ENCODE measurements at regions of chr10 and their contacts with region 1.

Region 1: GRCh38 chr10:71893920-71894319 is 42.9 kb upstream of the PSAP start:
- DNase-seq: no peak
- H3K4me3 ChIP-seq: no peak overlapping the region
- H3K4me3 Mint-ChIP-seq: no peak overlapping the region
- H3K27ac Mint-ChIP-seq: no peak overlapping the region
- H3K4me1 ChIP-seq: peaks cover 22% of the 10 kb centered on the region
- H3K4me1 Mint-ChIP-seq: peaks cover 20% of the 10 kb centered on the region
- H3K27me3 ChIP-seq: no peaks in the 10 kb centered on the region
- H3K27me3 Mint-ChIP-seq: no peaks in the 10 kb centered on the region
- CTCF ChIP-seq: no peak

Region 2: DNA sequence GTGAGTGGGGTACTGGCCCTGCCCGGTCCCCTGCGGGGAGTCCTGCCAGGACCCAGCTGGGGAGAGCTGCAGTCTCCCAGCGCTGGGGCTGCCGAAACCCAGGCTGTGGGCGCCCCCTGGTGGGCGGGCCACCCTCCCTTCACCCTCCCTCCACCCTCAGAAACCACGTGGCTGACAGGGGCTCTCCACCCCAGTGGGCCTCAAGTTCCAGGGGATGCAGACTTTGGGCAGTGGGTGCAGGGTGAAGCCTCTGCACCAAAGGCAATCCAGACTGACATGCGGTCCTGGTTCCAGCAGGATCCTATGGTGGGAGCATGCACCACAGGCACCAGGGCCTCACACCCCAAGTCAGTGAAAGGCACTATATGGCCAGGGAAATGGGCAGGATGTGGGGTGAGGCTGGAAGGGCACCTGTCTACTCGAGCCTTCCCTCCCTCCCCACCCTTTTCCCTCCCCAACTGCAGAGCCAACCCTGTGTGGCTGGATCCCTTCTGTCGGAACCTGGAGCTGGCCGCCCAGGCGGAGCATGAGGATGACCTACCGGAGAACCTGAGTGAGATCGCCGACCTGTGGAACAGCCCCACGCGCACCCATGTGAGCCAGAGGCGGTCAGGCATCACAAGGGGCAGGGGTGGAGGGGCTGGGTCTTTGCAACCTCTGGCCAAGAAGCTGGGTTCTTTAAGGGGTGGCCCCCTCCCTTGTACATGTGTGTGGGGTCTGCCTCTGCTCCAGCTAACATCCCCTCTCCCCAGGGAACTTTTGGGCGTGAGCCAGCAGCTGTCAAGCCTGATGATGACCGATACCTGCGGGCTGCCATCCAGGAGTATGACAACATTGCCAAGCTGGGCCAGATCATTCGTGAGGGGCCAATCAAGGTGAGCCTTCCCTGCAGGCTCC is 81.7 kb before region 1 on chr10:
- CTCF ChIA-PET with region 1: interaction called, 5 read pairs
- POLR2A ChIA-PET with region 1: no interaction called
- intact Hi-C with region 1: loop called (anchors 1 kb)
- DNase-seq: peak; percentile 74 to 91
- H3K4me3 ChIP-seq: no peak overlapping the region
- H3K4me3 Mint-ChIP-seq: no peak overlapping the region
- H3K27ac Mint-ChIP-seq: no peak overlapping the region
- H3K4me1 ChIP-seq: no peaks in the 10 kb centered on the region
- H3K4me1 Mint-ChIP-seq: peaks cover 7% of the 10 kb centered on the region
- H3K27me3 ChIP-seq: no peaks in the 10 kb centered on the region
- H3K27me3 Mint-ChIP-seq: no peaks in the 10 kb centered on the region
- CTCF ChIP-seq: peak; percentile 98

Region 3: GRCh38 chr10:71850637-71851464 is 43.1 kb before region 1 on chr10 and contains the start of gene PSAP:
- CTCF ChIA-PET with region 1: interaction called, 29 read pairs
- POLR2A ChIA-PET with region 1: no interaction called
- intact Hi-C with region 1: no loop called
- DNase-seq: peak; percentile 100
- H3K4me3 ChIP-seq: peak within 1 kb of the TSS; percentile 75
- H3K4me3 Mint-ChIP-seq: peak within 1 kb of the TSS; percentile 92
- H3K27ac Mint-ChIP-seq: peak within 1 kb of the TSS; percentile 90
- H3K4me1 ChIP-seq: peaks cover 20% of the 10 kb centered on the region
- H3K4me1 Mint-ChIP-seq: peaks cover 27% of the 10 kb centered on the region
- H3K27me3 ChIP-seq: no peaks in the 10 kb centered on the region
- H3K27me3 Mint-ChIP-seq: no peaks in the 10 kb centered on the region
- CTCF ChIP-seq: no peak
- total RNA-seq, gene PSAP: 1,227 and 1,316 TPM in 2 replicates

Region 4: DNA sequence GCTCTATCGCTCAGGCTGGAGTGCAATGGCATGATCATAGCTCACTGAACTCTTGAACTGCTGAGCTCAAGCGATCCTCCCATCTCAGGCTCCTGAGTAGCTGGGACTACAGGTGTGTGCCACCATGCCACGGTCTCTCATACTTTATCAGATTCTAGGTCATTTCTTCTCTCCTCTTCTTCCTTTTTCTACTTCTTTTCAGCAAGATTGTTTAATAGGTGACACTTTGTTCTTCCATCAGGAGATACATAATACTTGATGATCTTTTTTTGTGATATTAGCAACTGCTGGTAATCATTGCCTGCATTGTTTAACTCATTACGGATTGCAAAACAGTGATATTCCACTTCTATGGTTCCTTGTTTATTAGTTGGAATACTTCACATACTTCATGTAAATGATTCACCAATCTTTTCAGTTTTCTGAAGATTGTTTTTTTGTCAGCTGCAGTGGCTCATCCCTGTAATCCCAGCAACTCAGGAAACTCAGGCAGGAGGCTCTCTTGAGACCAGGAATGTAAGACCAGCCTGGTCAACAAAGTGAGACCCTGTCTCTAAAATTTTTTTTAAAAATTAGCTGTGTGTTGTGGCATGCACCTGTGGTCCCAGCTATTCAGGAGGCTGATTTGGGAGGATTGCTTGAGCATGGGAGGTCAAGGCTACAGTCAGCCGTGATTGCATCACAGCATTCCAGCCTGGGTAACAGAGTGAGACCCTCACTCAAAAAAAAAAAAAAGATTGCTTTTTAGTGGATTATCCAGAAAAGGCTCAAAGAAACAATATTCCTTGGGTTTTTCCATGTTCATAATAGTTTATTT is 34.1 kb after region 1 on chr10:
- CTCF ChIA-PET with region 1: interaction called, 4 read pairs
- POLR2A ChIA-PET with region 1: no interaction called
- intact Hi-C with region 1: loop called (anchors 2 kb)
- DNase-seq: peak; percentile 74 to 77
- H3K4me3 ChIP-seq: no peak overlapping the region
- H3K4me3 Mint-ChIP-seq: peak overlapping the region; percentile 19
- H3K27ac Mint-ChIP-seq: peak overlapping the region; percentile 60
- H3K4me1 ChIP-seq: peaks cover 25% of the 10 kb centered on the region
- H3K4me1 Mint-ChIP-seq: peaks cover 25% of the 10 kb centered on the region
- H3K27me3 ChIP-seq: no peaks in the 10 kb centered on the region
- H3K27me3 Mint-ChIP-seq: no peaks in the 10 kb centered on the region
- CTCF ChIP-seq: no peak

Region 5: DNA sequence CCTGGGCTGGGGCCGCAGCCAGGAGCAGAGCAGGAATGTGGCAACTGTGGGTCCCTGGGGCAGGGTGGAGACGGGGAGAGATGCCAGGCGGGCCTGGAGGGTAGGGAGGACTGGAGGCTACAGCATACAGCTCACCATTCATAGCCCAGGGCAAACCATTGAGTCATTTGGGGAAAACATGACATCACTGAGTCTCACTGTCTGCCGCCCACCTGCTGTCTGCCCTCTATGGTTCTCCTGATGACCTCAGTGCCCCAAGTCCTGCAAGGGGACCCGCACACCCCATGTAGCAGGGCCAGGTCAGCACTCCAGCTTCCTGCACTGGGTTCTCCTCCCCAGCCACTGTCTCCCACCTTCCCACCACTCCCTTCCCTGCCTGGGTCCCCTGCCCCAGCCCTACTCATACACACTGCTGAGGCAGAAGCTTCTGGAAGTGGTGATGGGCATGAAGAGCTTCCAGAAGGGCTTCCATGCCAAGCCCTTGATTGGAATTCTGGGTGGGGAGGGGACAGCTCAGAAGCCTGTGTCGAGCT is 80.6 kb after region 1 on chr10:
- CTCF ChIA-PET with region 1: interaction called, 9 read pairs
- POLR2A ChIA-PET with region 1: no interaction called
- intact Hi-C with region 1: loop called (anchors 1 kb)
- DNase-seq: no peak
- H3K4me3 ChIP-seq: no peak overlapping the region
- H3K4me3 Mint-ChIP-seq: no peak overlapping the region
- H3K27ac Mint-ChIP-seq: no peak overlapping the region
- H3K4me1 ChIP-seq: peaks cover 28% of the 10 kb centered on the region
- H3K4me1 Mint-ChIP-seq: peaks cover 26% of the 10 kb centered on the region
- H3K27me3 ChIP-seq: no peaks in the 10 kb centered on the region
- H3K27me3 Mint-ChIP-seq: no peaks in the 10 kb centered on the region
- CTCF ChIP-seq: no peak

Region 6: DNA sequence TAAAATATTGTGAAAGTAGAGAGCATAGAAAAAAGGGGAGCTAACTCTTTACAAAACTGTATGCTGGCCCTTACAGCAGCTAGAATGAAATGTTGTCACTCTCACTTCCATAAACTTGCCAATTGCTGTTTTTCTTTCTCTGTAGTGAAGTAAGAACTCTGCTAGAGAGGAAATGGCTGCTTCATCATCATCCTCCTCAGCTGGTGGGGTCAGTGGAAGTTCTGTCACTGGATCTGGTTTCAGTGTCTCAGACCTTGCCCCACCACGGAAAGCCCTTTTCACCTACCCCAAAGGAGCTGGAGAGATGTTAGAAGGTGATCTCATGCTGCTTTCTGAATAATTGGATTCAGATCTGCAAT is 329.8 kb after region 1 on chr10:
- CTCF ChIA-PET with region 1: interaction called, 6 read pairs
- POLR2A ChIA-PET with region 1: no interaction called
- intact Hi-C with region 1: loop called (anchors 2 kb)
- DNase-seq: no peak
- H3K4me3 ChIP-seq: no peak overlapping the region
- H3K4me3 Mint-ChIP-seq: no peak overlapping the region
- H3K27ac Mint-ChIP-seq: no peak overlapping the region
- H3K4me1 ChIP-seq: no peaks in the 10 kb centered on the region
- H3K4me1 Mint-ChIP-seq: no peaks in the 10 kb centered on the region
- H3K27me3 ChIP-seq: no peaks in the 10 kb centered on the region
- H3K27me3 Mint-ChIP-seq: no peaks in the 10 kb centered on the region
- CTCF ChIP-seq: no peak